Mammary epithelial cell (primary cell): ENCODE measurements at regions of chr17 and their contacts with region 1.

Region 1: GRCh38 chr17:10172241-10172741 is 26.1 kb downstream of the GAS7 start:
- DNase-seq: no peak
- H3K4me3 ChIP-seq: no peak overlapping the region
- H3K27ac ChIP-seq: no peak overlapping the region
- H3K4me1 ChIP-seq: no peaks in the 10 kb centered on the region
- H3K27me3 ChIP-seq: no peaks in the 10 kb centered on the region
- CTCF ChIP-seq: no peak

Region 2: GRCh38 chr17:10210151-10210930 is 38.0 kb after region 1 on chr17:
- CTCF ChIA-PET with region 1: no interaction called
- dilution Hi-C with region 1: loop called (anchors 5 kb)
- in situ Hi-C with region 1: no loop called
- intact Hi-C with region 1: no loop called
- DNase-seq: peak; percentile 21
- H3K4me3 ChIP-seq: no peak overlapping the region
- H3K27ac ChIP-seq: no peak overlapping the region
- H3K4me1 ChIP-seq: no peaks in the 10 kb centered on the region
- H3K27me3 ChIP-seq: no peaks in the 10 kb centered on the region
- CTCF ChIP-seq: no peak